Transverse colon (tissue), 4 donors: ENCODE measurements at regions of chr18 and their contacts with region 1.

Region 1: GRCh38 chr18:32552421-32553030 is 81.8 kb upstream of the GAREM1 start:
- DNase-seq: peak; percentile 70
- H3K4me3 ChIP-seq: no peak overlapping the region
- H3K27ac ChIP-seq: no peak overlapping the region
- H3K4me1 ChIP-seq: peaks cover 0 to 3% (median 0%) of the 10 kb centered on the region in 4 donors
- H3K27me3 ChIP-seq: no peaks in the 10 kb centered on the region
- CTCF ChIP-seq: peak; percentile 69 to 90 (median 84)
- EP300 ChIP-seq: no peak
- POLR2A ChIP-seq: no peak

Region 2: DNA sequence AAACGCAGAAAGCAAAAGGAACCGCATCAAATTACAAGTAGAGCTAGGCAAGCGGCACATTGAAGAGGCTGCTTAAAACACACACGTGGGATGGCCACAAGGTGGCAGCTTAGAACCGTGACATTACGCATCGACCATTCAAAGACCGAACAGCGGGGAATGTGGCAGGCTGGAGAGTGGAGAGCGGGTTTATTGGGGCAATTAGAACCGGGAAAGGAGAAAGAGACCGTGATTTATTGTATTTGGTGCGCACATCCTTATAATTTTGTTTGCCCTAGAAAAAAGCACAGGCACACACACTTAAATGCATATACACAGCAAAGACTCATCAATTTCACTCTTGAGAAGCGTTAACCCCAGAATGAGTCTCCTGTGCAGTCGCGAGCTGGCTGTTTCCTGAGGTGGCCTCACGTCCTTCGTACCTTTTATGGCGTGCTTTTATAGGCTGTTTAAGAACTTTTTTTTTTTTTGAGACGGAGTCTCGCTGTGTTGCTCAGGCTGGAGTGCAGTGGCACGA is 394.4 kb before region 1 on chr18:
- in situ Hi-C with region 1: loop called (anchors 5 to 10 kb)
- intact Hi-C with region 1: loop called (anchors 5 kb)
- DNase-seq: peak; percentile 87
- H3K4me3 ChIP-seq: peak overlapping the region in 3 of 4 donors; percentile 15 to 47 (median 21)
- H3K27ac ChIP-seq: peak overlapping the region; percentile 62 to 75 (median 66)
- H3K4me1 ChIP-seq: peaks cover 0 to 29% (median 14%) of the 10 kb centered on the region in 4 donors
- H3K27me3 ChIP-seq: no peaks in the 10 kb centered on the region
- CTCF ChIP-seq: peak; percentile 75 to 95 (median 83)
- EP300 ChIP-seq: no peak
- POLR2A ChIP-seq: no peak

Region 3: DNA sequence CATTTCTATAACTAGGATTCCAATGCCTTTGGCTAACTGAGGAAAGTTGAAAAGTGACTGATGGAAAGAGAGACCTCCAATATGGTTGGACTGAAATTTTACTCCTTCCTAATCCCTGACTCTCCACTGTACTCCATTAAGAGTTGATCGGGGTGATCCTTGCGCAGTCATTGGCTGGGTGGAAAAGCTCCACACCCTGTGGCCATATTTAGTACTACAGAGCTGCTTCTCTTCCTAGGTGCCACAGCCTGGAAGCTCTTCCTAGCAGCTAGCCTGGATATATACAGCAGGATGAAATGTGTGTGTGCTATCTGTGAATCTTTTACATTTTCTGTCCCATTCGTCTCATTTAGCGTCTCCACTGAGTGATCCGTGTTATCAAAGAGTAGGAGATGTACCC is 291.5 kb before region 1 on chr18:
- in situ Hi-C with region 1: loop called in 3 of 4 experiments (anchors 10 to 25 kb)
- intact Hi-C with region 1: no loop called
- DNase-seq: no peak
- H3K4me3 ChIP-seq: no peak overlapping the region
- H3K27ac ChIP-seq: no peak overlapping the region
- H3K4me1 ChIP-seq: peaks cover 0 to 23% (median 9%) of the 10 kb centered on the region in 4 donors
- H3K27me3 ChIP-seq: no peaks in the 10 kb centered on the region
- CTCF ChIP-seq: peak in 2 of 5 experiments; percentile 4 to 8
- EP300 ChIP-seq: no peak
- POLR2A ChIP-seq: no peak

Region 4: DNA sequence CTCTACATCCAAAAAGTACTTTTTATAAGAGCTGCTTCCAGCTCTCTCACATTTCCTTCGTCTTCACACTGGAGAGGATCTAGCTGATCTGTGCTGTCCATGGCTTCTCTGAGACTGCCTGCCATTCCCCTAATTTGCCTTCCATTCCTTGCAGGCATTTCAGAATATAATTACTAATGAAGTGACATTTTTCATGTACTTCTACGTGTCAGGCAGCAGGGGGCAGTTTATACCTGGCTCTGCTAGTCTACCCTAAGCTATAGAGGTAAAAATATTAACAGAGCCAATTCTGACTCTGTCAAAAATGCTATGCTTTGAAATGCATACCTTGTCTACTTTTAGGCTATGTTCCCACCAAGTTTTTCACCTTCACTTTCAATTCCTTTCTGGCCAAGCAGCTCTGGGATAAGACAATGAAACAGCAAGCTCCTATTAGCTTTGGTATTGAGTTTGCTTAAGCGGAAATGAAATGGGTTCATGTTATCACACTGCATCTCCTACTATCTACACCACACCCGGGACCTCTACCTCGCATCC is 280.8 kb before region 1 on chr18:
- in situ Hi-C with region 1: loop called (anchors 10 to 25 kb)
- intact Hi-C with region 1: loop called (anchors 1 kb)
- DNase-seq: peak; percentile 21
- H3K4me3 ChIP-seq: no peak overlapping the region
- H3K27ac ChIP-seq: no peak overlapping the region
- H3K4me1 ChIP-seq: peaks cover 0 to 22% (median 5%) of the 10 kb centered on the region in 4 donors
- H3K27me3 ChIP-seq: no peaks in the 10 kb centered on the region
- CTCF ChIP-seq: peak; percentile 65 to 71 (median 67)
- EP300 ChIP-seq: no peak
- POLR2A ChIP-seq: no peak

Region 5: GRCh38 chr18:32868406-32868805 is 315.9 kb after region 1 on chr18:
- in situ Hi-C with region 1: no loop called
- intact Hi-C with region 1: no loop called
- DNase-seq: no peak
- H3K4me3 ChIP-seq: no peak overlapping the region
- H3K27ac ChIP-seq: no peak overlapping the region
- H3K4me1 ChIP-seq: no peaks in the 10 kb centered on the region
- H3K27me3 ChIP-seq: no peaks in the 10 kb centered on the region
- CTCF ChIP-seq: no peak
- EP300 ChIP-seq: no peak
- POLR2A ChIP-seq: no peak